ENCODE measurements at regions of chr15 and their contacts with region 1.

Region 1: GRCh38 chr15:51368751-51369450 is 27.4 kb downstream of the GLDN start:
- DNase-seq: peak; percentile 81
- H3K4me3 ChIP-seq: no peak overlapping the region
- H3K27ac ChIP-seq: peak overlapping the region; percentile 85
- H3K27me3 ChIP-seq: no peaks in the 10 kb centered on the region
- CTCF ChIP-seq: no peak

Region 2: GRCh38 chr15:51312166-51313097 is 56.5 kb before region 1 on chr15:
- CTCF ChIA-PET with region 1: no interaction called
- POLR2A ChIA-PET with region 1: interaction called, 12 read pairs
- DNase-seq: peak; percentile 68
- H3K4me3 ChIP-seq: no peak overlapping the region
- H3K27ac ChIP-seq: peak overlapping the region; percentile 77
- H3K27me3 ChIP-seq: peaks cover 5% of the 10 kb centered on the region
- CTCF ChIP-seq: no peak

Region 3: DNA sequence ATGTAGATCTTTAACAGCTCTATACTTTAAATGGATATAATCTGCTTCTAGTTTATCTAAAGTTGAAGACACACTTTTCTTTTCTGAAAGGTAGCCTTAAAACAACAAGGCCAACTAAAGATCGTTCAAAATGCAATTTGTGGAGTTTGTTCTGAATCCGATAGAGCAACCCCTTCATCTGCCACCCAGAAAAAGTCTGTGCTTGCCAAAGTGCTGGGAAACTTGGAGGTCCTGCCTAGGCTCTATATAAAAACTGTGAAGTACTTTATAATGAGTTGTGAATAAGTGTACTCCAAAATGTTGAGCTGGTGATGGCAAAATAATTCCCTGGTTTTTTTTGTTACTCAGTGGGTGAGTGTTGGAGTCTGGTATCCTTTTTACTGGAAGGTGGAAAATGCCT is 14.9 kb before region 1 on chr15:
- CTCF ChIA-PET with region 1: no interaction called
- POLR2A ChIA-PET with region 1: interaction called, 10 read pairs
- DNase-seq: no peak
- H3K4me3 ChIP-seq: no peak overlapping the region
- H3K27ac ChIP-seq: no peak overlapping the region
- H3K27me3 ChIP-seq: peaks cover 21% of the 10 kb centered on the region
- CTCF ChIP-seq: no peak

Measured in AG04450 (cell line).